Spleen (tissue), 13 donors: ENCODE measurements at regions of chrX and their contacts with region 1.

Region 1: GRCh38 chrX:1649621-1650020 is 34.8 kb downstream of the ASMT start:
- DNase-seq: no peak
- H3K4me3 ChIP-seq: no peak overlapping the region
- H3K27ac ChIP-seq: no peak overlapping the region
- H3K4me1 ChIP-seq: peaks cover 0 to 12% (median 0%) of the 10 kb centered on the region in 6 donors
- H3K27me3 ChIP-seq: peaks cover 0 to 21% (median 0%) of the 10 kb centered on the region in 7 donors
- CTCF ChIP-seq: no peak
- POLR2A ChIP-seq: no peak

Region 2: DNA sequence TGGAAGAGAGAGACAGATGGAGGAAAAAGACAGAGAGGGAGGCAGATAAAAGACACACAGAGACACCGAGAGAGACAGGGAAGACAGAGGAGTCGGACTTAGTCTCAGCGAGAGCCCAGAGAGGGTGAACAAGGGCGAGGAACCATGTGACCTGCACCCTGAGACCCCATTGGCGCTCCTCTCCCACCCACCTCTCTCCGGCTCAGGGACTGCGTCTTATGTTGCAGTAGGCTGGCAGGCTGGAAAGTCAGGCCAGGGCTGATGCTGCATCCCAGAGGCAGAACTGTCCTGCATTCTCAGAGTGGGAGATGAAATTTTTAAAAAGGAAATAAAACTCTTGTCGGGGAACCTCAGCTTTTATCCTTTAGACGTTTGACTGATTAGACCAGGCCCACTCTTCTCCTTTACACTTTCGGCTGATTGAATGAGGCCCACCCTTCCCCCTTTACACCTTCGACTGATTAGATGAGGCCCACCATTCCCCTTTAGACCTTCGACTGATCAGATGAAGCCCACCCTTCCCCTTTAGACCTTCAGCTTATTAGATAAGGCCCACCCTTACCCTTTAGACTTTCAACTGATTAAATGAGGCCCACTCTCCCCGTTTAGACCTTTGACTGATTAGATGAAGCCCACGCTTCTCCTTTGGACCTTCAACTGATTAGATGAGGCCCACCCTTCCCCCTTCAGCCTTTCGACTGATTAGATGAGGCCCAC is 342.6 kb before region 1 on chrX:
- intact Hi-C with region 1: no loop called
- DNase-seq: no peak
- H3K4me3 ChIP-seq: no peak overlapping the region
- H3K27ac ChIP-seq: no peak overlapping the region
- H3K4me1 ChIP-seq: no peaks in the 10 kb centered on the region
- H3K27me3 ChIP-seq: no peaks in the 10 kb centered on the region
- CTCF ChIP-seq: no peak
- POLR2A ChIP-seq: no peak

Region 3: GRCh38 chrX:2589186-2590030 is 939.8 kb after region 1 on chrX:
- intact Hi-C with region 1: loop called (anchors 5 kb)
- DNase-seq: no peak
- H3K4me3 ChIP-seq: no peak overlapping the region
- H3K27ac ChIP-seq: no peak overlapping the region
- H3K4me1 ChIP-seq: peaks cover 0 to 15% (median 0%) of the 10 kb centered on the region in 6 donors
- H3K27me3 ChIP-seq: peaks cover 0 to 16% (median 10%) of the 10 kb centered on the region in 7 donors
- CTCF ChIP-seq: no peak
- POLR2A ChIP-seq: no peak